ENCODE measurements at regions of chr6 and their contacts with region 1.

Region 1: GRCh38 chr6:170152989-170153388 is 137.9 kb downstream of the DLL1 start:
- DNase-seq: peak in 3 of 5 donors; percentile 54 to 71 (median 62)
- ATAC-seq: peak in 2 of 4 donors; percentile 36 to 59
- H3K4me3 ChIP-seq: peak overlapping the region in 3 of 12 donors; percentile 20 to 41 (median 34)
- H3K27ac ChIP-seq: peak overlapping the region; percentile 73 to 93 (median 84)
- H3K4me1 ChIP-seq: peaks cover 0 to 36% (median 25%) of the 10 kb centered on the region in 12 donors
- H3K27me3 ChIP-seq: peaks cover 0 to 4% (median 0%) of the 10 kb centered on the region in 9 donors
- CTCF ChIP-seq: no peak
- POLR2A ChIP-seq: no peak

Region 2: DNA sequence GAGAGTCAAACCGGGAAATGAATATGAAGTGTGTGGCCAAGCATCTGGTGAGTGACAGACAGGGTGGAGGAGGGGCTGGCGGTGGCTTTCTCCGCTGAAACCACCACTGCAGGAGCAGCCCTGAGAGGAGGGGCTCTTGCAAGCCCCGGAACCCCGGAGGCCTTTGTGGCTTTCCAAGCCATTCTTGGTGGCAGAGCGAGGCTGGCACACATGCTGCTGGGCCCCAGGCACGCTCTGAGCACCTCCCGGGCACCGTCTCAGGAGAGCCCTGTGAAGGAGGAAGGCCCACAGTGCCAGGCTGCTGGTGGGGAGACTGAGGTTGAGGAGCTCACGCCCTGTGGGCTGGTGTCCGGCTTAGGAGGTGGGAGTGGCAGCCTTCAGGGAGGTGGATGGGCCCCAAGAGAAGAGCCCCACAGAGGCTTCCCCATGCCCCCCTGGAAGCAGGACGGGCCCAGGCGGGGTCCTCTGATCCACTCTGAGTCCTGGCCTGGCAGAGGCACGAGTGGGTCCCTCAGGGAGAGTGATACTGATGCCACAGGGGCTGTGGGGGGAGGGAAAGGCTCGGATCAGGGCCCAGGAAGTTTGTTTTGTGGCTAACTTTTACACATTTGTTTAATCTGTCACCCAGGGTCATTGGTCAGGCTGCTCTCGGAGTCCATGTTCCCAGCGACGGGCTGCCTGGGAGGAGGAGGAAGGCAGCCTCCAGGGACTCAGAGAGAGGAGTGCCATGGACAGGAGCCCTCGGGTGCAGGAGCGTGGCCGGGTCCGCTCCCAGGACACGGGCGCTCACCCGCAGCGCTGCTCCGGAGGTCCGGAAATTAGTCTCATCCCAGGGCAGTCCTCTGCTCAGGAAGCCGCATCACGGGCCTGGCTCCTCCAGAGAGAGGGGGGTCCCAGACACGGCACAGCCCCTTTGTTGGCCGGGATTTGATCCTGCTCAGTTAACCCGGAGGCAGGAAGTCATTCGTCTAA is 230.8 kb before region 1 on chr6:
- intact Hi-C with region 1: no loop called
- DNase-seq: no peak
- ATAC-seq: peak in 2 of 4 donors; percentile 29 to 34
- H3K4me3 ChIP-seq: no peak overlapping the region
- H3K27ac ChIP-seq: no peak overlapping the region
- H3K4me1 ChIP-seq: no peaks in the 10 kb centered on the region
- H3K27me3 ChIP-seq: peaks cover 0 to 3% (median 0%) of the 10 kb centered on the region in 9 donors
- CTCF ChIP-seq: no peak
- POLR2A ChIP-seq: no peak

Region 3: GRCh38 chr6:170024952-170025911 is 127.8 kb before region 1 on chr6:
- intact Hi-C with region 1: loop called in 1 of 10 experiments (anchors 5 kb)
- DNase-seq: peak in 2 of 5 donors; percentile 41 to 80
- ATAC-seq: peak; percentile 39 to 75 (median 54)
- H3K4me3 ChIP-seq: no peak overlapping the region
- H3K27ac ChIP-seq: peak overlapping the region in 2 of 12 donors; percentile 8 to 55
- H3K4me1 ChIP-seq: peaks cover 0 to 14% (median 3%) of the 10 kb centered on the region in 12 donors
- H3K27me3 ChIP-seq: peaks cover 0 to 13% (median 4%) of the 10 kb centered on the region in 9 donors
- CTCF ChIP-seq: no peak
- POLR2A ChIP-seq: no peak

Region 4: DNA sequence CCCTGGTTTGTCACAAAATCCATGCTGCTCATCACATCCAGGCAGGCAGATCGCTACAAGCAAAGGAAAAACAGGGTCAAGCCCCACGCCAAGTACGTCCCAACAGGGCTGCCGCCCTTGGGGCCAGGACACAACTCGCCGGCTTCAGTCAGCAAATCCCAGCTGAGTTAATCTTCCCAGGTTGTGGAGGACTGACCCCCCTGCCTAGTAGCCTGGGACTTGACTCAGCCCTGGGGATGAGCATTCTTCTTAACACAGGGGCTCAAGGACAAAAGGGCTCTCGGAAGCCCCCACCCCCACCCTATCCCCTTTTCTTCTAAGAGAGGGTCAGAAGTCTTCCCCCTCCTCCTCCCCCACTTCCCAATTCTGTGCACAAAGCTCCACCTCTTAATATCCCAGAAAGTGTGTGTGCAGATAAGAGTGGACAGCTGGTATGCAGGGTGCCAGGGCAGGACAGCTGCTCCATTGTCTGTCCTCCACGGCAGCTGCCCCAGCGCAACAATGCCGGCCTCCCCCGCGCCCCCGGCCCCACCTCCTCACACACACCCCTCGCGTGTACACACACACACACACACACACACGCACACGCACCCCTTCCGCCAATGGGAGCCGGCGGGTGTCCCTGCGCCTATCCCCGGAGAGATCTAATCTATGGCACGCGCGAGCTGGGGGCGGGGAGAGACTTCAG is 133.4 kb after region 1 on chr6:
- intact Hi-C with region 1: loop called in 4 of 10 experiments (anchors 5 to 10 kb)
- DNase-seq: peak in 2 of 5 donors; percentile 72 to 74
- ATAC-seq: peak; percentile 9 to 31 (median 24)
- H3K4me3 ChIP-seq: peak overlapping the region in 7 of 12 donors; percentile 3 to 95 (median 80)
- H3K27ac ChIP-seq: peak overlapping the region in 8 of 12 donors; percentile 31 to 90 (median 82)
- H3K4me1 ChIP-seq: peaks cover 8 to 58% (median 38%) of the 10 kb centered on the region in 12 donors
- H3K27me3 ChIP-seq: peaks cover 0 to 47% (median 0%) of the 10 kb centered on the region in 9 donors
- CTCF ChIP-seq: no peak
- POLR2A ChIP-seq: no peak

Measured in heart left ventricle (tissue), 16 donors.